ENCODE measurements at regions of chr11 and their contacts with region 1.

Region 1: GRCh38 chr11:85694386-85694980 is 8.5 kb upstream of the CCDC89 start:
- DNase-seq: no peak
- H3K4me3 ChIP-seq: no peak overlapping the region
- CTCF ChIP-seq: peak; percentile 56

Region 2: DNA sequence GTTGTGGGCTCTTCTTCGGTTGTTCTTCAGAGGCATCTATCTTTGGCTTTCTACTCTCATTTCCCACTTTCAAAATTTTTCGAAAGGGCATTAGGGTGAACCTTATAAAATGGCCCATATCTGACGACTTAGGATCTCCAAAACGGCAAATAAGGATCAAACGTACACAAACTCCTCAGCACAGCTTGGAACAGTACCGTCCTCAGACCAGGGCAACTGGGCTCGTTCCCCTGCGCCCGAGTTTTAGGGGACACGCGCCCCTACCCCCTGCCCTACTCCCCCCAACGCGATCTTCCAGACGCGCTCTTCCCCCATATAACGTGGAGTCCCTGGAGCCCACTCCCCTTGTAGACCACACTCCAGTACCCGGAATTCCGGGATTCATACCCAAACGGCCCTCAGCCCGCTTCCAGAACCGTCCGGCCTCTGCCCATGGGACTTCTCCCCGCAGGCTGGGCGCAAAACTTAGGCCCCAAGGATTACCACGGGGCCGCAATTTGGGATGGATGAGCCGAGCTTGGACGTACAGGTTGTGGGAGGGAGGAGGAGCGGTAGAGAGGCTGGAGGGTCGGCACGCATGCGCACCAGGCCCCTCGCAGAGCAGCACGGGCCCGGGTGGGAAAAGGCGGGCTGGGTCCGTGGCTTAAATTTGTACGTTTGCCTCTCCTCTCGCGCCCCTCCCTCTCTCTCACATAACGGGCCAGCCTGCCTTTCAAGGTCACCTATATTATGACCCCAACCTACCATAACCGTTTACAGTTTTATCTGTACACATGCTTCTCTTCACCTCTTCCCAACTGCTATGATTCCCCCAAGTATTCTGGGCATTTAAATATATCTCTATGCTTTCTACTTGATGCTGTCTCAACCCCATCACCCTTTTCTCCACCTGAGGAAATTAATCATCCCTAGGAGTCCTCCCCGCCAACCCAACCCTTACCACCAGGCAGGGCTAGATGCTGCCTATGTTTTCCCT is 11.9 kb before region 1 on chr11:
- CTCF ChIA-PET with region 1: interaction called, 21 read pairs
- POLR2A ChIA-PET with region 1: no interaction called
- DNase-seq: no peak
- H3K4me3 ChIP-seq: peak overlapping the region; percentile 61
- CTCF ChIP-seq: no peak

Region 3: DNA sequence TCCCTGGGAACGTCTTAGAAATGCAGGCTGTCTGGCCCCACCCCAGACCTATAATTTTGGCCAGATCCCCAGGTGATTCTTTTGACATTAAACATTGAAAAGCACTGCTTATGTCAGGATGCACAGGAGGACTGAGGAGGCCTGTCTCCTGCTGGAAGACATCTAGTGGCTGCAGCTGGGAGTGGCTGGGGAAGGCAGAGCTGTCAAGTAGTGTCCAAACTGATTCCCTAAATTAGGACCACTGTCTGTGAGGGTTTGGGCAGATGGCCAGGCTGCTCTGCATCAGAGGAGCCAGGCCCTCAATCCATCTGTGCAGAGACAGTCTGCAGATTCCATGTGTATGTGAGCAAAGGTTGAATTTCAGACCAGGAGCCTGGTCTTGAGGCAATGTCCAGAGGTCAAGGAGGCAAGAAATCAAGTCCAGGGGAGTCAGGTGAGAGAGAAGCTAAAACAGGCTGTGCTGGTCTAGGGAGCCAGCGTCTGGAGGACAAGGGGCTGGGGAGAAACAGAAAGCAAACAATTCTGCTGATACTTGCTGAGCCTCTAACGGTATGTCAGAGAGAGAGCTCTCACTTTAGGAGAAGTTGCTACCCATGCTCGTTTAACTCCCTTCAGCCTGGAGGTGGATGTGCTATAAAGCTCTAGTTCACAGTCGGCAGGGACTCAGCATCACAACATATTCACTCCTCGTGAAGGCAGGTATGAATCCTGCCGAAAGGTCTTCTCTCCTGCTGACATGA is 131.8 kb after region 1 on chr11:
- CTCF ChIA-PET with region 1: interaction called, 62 read pairs
- POLR2A ChIA-PET with region 1: no interaction called
- DNase-seq: no peak
- H3K4me3 ChIP-seq: no peak overlapping the region
- CTCF ChIP-seq: peak; percentile 80

Measured in AG04449 (cell line).